ENCODE measurements at regions of chr15 and their contacts with region 1.

Region 1: DNA sequence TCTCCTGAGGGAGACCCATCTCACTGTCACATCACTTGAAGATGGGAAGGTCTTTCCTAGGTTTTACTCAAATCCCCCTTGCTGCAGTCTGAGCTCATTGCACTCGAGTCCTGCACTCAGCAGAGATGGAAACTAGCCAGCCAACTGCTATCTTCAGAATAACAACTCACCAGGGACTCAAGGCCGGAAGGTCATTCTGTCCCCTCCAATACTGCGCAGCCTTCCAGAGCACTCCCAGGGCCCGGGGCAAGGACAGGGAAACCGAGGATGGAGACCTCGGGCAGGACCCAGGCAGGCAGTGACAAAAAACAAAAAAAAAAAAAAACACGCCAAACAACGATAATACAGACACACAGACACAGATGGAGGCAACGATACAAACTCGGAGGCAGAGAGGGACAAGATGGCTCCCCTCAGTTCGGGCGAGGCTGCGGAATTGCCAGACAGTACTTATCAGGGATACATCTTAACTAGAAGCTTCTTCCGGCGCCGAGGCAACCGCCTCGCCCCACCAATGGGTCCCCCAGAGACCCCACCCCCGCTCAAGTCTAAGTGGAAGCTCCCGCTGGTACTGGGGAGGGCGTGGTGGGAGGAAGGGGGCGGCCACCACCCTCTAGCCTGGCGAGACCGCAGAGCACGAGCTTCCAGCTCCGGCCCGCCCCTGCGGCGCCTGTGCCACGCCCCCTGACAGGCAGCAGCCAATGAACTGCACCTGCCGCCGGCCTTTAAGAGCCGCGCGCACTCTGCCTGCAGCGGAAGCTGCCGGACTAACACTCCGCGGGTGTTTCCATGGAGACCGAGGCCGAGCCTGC is 7.0 kb upstream of the MAP1A start:
- DNase-seq: peak; percentile 94
- H3K4me3 ChIP-seq: peak overlapping the region; percentile 50
- CTCF ChIP-seq: peak; percentile 43

Region 2: GRCh38 chr15:43483306-43484128 is 26.9 kb before region 1 on chr15:
- in situ Hi-C with region 1: loop called (anchors 5 kb)
- DNase-seq: no peak
- H3K4me3 ChIP-seq: no peak overlapping the region
- CTCF ChIP-seq: peak; percentile 26

Region 3: GRCh38 chr15:43625106-43625505 is 114.7 kb after region 1 on chr15:
- in situ Hi-C with region 1: no loop called
- DNase-seq: no peak
- H3K4me3 ChIP-seq: no peak overlapping the region
- CTCF ChIP-seq: no peak